ENCODE measurements at regions of chr13 and their contacts with region 1.

Region 1: GRCh38 chr13:36841391-36841790 is 22.4 kb downstream of the RFXAP start:
- DNase-seq: no peak
- CTCF ChIP-seq: no peak

Region 2: DNA sequence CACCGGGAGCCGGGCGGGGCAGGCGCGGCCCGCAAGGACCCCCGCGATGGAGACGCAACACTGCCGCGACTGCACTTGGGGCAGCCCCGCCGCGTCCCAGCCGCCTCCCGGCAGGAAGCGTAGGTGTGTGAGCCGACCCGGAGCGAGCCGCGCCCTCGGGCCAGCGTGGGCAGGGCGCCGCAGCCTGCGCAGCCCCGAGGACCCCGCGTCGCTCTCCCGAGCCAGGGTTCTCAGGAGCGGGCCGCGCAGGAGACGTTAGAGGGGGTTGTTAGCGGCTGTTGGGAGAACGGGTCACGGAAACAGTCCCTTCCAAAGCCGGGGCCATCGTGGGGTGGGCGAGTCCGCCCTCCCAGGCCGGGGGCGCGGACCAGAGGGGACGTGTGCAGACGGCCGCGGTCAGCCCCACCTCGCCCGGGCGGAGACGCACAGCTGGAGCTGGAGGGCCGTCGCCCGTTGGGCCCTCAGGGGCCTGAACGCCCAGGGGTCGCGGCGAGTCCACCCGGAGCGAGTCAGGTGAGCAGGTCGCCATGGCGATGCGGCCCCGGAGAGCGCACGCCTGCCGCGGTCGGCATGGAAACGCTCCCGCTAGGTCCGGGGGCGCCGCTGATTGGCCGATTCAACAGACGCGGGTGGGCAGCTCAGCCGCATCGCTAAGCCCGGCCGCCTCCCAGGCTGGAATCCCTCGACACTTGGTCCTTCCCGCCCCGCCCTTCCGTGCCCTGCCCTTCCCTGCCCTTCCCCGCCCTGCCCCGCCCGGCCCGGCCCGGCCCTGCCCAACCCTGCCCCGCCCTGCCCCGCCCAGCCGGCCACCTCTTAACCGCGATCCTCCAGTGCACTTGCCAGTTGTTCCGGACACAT is 409.5 kb before region 1 on chr13 and contains the start of gene CCNA1:
- CTCF ChIA-PET with region 1: no interaction called
- POLR2A ChIA-PET with region 1: no interaction called
- DNase-seq: peak; percentile 51
- CTCF ChIP-seq: no peak

Region 3: DNA sequence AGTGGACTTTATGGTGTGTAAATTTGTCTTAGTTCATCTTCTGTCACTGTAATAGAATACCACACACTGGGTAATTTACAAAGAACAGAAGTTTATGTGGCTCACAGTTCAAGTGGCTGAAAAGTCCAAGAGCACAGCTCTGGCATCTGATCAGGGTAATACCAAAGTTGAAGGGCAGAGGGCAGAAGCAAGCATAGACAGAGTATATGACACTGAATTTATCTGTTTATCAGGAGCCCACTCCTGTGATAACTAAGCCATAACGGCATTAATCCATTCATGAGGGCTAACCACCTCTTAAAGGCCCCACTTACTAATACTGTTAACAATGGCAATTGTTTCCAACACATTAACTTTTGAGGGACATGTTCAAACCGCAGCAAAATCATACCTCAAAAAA is 26.3 kb before region 1 on chr13:
- CTCF ChIA-PET with region 1: interaction called, 11 read pairs
- POLR2A ChIA-PET with region 1: no interaction called
- DNase-seq: no peak
- CTCF ChIP-seq: peak; percentile 8

Region 4: DNA sequence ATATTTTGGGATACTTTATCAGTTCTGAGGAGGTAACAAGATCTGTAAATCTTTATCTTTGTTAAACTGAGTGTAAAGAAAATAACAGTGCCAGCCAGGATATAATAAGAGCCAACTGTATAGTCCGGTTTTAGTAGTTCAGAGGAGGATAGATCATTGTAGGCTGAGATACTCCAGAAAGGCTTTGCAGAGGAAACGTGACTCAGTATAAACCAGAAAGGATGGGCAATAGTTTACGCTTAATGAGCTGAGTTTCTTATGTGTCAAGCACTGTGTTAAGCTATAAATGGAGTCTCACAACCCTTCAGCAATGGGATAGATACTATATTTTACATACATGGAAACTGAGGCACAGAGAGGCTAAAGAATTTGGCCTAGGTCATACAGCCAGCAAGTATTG is 18.6 kb before region 1 on chr13:
- CTCF ChIA-PET with region 1: interaction called, 10 read pairs
- POLR2A ChIA-PET with region 1: no interaction called
- DNase-seq: no peak
- CTCF ChIP-seq: no peak

Region 5: DNA sequence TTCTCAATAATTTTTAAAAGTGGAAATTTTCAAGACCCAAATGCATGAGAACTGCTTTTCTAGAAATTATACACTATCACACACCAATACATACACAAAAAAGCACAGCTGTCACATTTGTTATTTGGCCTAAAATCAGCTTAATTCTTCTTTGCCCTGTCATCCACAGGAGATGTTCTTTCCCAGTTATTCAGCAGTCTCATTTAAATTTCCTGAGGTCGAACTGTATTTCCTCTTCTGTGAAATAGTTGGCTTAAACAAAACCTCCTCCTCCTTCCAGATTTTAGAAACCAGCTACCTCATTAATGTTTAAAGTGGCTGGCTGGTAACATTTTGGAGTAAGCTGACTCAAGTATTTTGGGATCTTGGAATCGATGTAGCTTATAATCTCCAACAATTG is 39.6 kb after region 1 on chr13:
- CTCF ChIA-PET with region 1: no interaction called
- POLR2A ChIA-PET with region 1: no interaction called
- DNase-seq: no peak
- CTCF ChIP-seq: no peak

Region 6: GRCh38 chr13:37074703-37075102 is 233.3 kb after region 1 on chr13:
- CTCF ChIA-PET with region 1: no interaction called
- POLR2A ChIA-PET with region 1: no interaction called
- DNase-seq: no peak
- CTCF ChIP-seq: peak; percentile 21